ENCODE measurements at regions of chr10 and their contacts with region 1.

Region 1: GRCh38 chr10:3757638-3758490 is 27.1 kb downstream of the KLF6 start:
- DNase-seq: peak in 19 of 35 experiments; percentile 28 to 76 (median 43)
- ATAC-seq: peak; percentile 77 to 87 (median 85)
- H3K4me3 ChIP-seq: peak overlapping the region in 1 of 2 donors; percentile 16
- H3K4me3 Mint-ChIP-seq: peak overlapping the region; percentile 37 to 64 (median 59)
- H3K27ac ChIP-seq: peak overlapping the region; percentile 97
- H3K27ac Mint-ChIP-seq: peak overlapping the region; percentile 96 to 98
- H3K4me1 ChIP-seq: peaks cover 0 to 50% of the 10 kb centered on the region in 2 experiments
- H3K4me1 Mint-ChIP-seq: peaks cover 31 to 78% (median 67%) of the 10 kb centered on the region in 3 donors
- H3K27me3 ChIP-seq: no peaks in the 10 kb centered on the region
- H3K27me3 Mint-ChIP-seq: peaks cover 0 to 4% of the 10 kb centered on the region in 2 donors

Region 2: DNA sequence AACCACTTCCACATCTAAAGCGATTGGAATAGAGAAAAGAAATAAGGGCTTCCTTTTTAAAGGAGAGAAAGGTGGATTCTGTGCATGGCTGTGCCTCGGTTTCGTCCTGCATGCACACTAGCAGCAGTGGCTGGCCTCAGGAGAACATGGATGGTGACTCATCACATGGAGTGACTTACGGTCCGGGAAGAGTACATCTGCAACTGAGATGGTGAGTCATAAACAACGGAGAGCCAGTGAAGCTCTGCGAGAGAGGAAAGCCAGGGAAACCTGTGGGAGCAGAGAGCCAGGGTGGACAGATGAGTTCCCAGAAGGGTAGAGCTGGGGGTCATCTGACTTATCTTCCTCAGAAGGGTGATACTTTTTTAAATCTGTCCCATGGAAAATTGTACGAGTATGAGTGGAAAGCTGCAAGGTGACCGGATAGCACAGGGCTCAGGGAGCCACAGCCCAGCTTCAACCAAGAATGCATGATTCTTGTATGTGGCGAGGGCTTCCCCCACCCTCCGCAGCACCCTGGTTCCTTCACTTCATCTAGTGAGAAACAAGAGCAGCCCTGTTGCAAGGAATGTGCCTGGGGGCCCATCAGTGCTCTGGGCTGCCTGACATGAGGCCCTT is 231.9 kb before region 1 on chr10:
- CTCF ChIA-PET with region 1: no interaction called
- POLR2A ChIA-PET with region 1: no interaction called
- DNase-seq: no peak
- ATAC-seq: no peak
- H3K4me3 ChIP-seq: no peak overlapping the region
- H3K4me3 Mint-ChIP-seq: no peak overlapping the region
- H3K27ac ChIP-seq: no peak overlapping the region
- H3K27ac Mint-ChIP-seq: no peak overlapping the region
- H3K4me1 ChIP-seq: no peaks in the 10 kb centered on the region
- H3K4me1 Mint-ChIP-seq: peaks cover 0 to 2% (median 0%) of the 10 kb centered on the region in 3 donors
- H3K27me3 ChIP-seq: peaks cover 0 to 2% of the 10 kb centered on the region in 2 experiments
- H3K27me3 Mint-ChIP-seq: peaks cover 0 to 6% of the 10 kb centered on the region in 2 donors

Region 3: GRCh38 chr10:3668966-3669330 is 88.9 kb before region 1 on chr10:
- CTCF ChIA-PET with region 1: no interaction called
- POLR2A ChIA-PET with region 1: no interaction called
- DNase-seq: peak in 2 of 35 experiments; percentile 8 to 74
- ATAC-seq: peak; percentile 73 to 89 (median 80)
- H3K4me3 ChIP-seq: peak overlapping the region; percentile 47 to 65
- H3K4me3 Mint-ChIP-seq: peak overlapping the region; percentile 80 to 82 (median 82)
- H3K27ac ChIP-seq: peak overlapping the region; percentile 88
- H3K27ac Mint-ChIP-seq: peak overlapping the region; percentile 96 to 98
- H3K4me1 ChIP-seq: peaks cover 22 to 49% of the 10 kb centered on the region in 2 experiments
- H3K4me1 Mint-ChIP-seq: peaks cover 34 to 48% (median 40%) of the 10 kb centered on the region in 3 donors
- H3K27me3 ChIP-seq: peaks cover 0 to 3% of the 10 kb centered on the region in 2 experiments
- H3K27me3 Mint-ChIP-seq: peaks cover 0 to 3% of the 10 kb centered on the region in 2 donors

Region 4: GRCh38 chr10:3776796-3777571 is 19.1 kb after region 1 on chr10:
- CTCF ChIA-PET with region 1: interaction called in 1 of 2 experiments, 3 read pairs
- POLR2A ChIA-PET with region 1: interaction called, 3 to 18 read pairs
- DNase-seq: peak in 19 of 35 experiments; percentile 28 to 78 (median 47)
- ATAC-seq: peak; percentile 45 to 69 (median 62)
- H3K4me3 ChIP-seq: no peak overlapping the region
- H3K4me3 Mint-ChIP-seq: peak overlapping the region; percentile 8 to 64 (median 50)
- H3K27ac ChIP-seq: peak overlapping the region; percentile 99
- H3K27ac Mint-ChIP-seq: peak overlapping the region; percentile 75 to 89
- H3K4me1 ChIP-seq: peaks cover 24 to 73% of the 10 kb centered on the region in 2 experiments
- H3K4me1 Mint-ChIP-seq: peaks cover 66 to 77% (median 76%) of the 10 kb centered on the region in 3 donors
- H3K27me3 ChIP-seq: no peaks in the 10 kb centered on the region
- H3K27me3 Mint-ChIP-seq: no peaks in the 10 kb centered on the region